ENCODE measurements at regions of chr10 and their contacts with region 1.

Region 1: DNA sequence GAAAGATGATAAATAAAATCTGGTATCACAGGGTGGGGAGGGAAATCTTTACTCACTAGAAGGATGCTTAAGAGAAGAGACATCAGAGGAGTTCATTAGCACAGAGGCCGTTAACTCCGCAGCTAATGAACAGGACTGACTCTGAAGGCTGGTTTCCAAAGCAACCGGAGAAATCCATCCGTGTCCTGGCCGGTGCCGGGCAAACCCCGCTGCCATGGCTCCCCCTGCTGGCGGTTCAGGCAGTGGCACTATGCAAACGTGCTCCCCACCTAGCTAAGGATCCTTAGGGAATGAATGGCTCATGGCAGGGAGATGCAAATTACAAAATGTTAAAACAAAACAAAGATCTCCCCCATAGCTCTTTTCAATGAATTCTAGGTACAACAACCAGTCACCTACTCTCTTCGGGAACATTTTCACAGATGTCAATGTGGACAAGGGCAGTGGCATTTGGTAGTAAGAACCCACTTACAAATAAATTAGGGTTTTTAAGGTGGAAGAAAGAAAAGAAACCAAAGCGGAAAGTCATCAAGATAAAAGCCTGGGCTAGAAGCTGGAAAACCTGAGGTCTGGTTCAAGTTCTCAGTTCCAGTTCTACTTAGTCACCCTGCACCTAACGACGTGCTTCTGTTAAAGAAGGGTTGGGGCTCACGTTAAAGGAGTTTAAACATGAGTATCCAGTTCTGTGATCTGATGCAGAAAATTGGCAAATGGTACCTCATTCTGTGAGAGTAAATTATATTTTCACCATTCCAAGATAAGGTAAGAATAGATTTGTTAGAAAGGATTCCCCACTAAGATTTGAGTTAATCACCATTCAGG is 138.2 kb downstream of the SVIL start:
- DNase-seq: peak; percentile 74 to 90 (median 83)
- H3K4me3 ChIP-seq: no peak overlapping the region
- H3K27ac ChIP-seq: no peak overlapping the region
- H3K4me1 ChIP-seq: no peaks in the 10 kb centered on the region
- H3K27me3 ChIP-seq: no peaks in the 10 kb centered on the region
- CTCF ChIP-seq: peak; percentile 88 to 96 (median 90)
- POLR2A ChIP-seq: no peak

Region 2: DNA sequence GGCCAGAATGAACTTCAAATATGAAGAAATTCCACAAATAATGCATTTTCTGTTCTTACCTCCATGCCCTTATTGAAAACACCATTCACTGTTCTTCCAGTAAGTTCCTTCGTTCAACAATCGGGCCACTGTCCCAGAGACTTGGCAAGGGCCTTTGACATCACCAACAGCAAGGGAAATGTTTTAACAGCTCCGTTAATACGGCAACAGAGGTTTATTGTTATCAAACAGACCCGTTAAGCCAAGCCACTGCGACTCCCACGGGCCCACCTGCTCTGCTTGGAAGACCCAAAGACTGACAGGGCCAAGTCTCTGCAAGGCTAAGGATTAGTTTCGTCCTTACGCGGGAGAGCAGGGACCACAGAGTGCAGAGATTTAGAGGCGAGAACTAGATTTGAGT is 251.1 kb before region 1 on chr10:
- intact Hi-C with region 1: no loop called
- DNase-seq: no peak
- H3K4me3 ChIP-seq: no peak overlapping the region
- H3K27ac ChIP-seq: no peak overlapping the region
- H3K4me1 ChIP-seq: no peaks in the 10 kb centered on the region
- H3K27me3 ChIP-seq: peaks cover 3% of the 10 kb centered on the region
- CTCF ChIP-seq: no peak
- POLR2A ChIP-seq: no peak

Region 3: DNA sequence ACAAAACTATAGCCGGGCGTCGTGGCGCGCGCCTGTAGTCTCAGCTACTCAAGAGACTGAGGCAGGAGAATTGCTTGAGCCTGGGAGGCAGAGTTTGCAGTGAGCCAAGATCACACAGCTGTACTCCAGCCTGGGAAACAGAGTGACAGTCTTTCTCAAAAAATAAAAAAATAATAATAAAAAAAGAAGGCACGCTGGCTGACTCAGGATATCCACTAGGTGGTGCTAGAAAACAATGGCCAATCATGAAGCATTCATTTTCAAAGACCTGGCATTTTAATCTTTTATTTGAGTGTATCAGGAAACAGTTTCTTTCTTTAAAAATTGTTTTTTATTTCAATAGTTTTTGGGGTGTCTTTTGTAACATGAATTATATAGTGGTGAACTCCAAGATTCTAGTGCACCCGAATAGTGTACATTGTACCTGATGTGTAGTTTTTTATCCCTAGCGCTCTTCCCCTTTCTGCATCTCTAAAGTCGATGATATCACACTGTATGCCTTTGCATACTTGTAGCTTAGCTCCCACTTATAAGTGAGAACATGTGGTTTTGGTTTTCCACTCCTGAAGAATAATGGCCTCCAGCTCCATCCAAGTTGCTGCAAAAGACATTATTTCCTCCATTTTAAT is 119.1 kb before region 1 on chr10:
- intact Hi-C with region 1: loop called (anchors 5 to 10 kb)
- DNase-seq: peak in 2 of 7 donors; percentile 30 to 34
- H3K4me3 ChIP-seq: no peak overlapping the region
- H3K27ac ChIP-seq: no peak overlapping the region
- H3K4me1 ChIP-seq: no peaks in the 10 kb centered on the region
- H3K27me3 ChIP-seq: no peaks in the 10 kb centered on the region
- CTCF ChIP-seq: peak; percentile 63 to 82 (median 78)
- POLR2A ChIP-seq: no peak

Region 4: GRCh38 chr10:29386342-29386999 is 110.1 kb before region 1 on chr10:
- intact Hi-C with region 1: loop called in 1 of 2 experiments (anchors 10 kb)
- DNase-seq: peak in 2 of 7 donors; percentile 19 to 33
- H3K4me3 ChIP-seq: no peak overlapping the region
- H3K27ac ChIP-seq: no peak overlapping the region
- H3K4me1 ChIP-seq: no peaks in the 10 kb centered on the region
- H3K27me3 ChIP-seq: no peaks in the 10 kb centered on the region
- CTCF ChIP-seq: peak; percentile 68 to 88 (median 76)
- POLR2A ChIP-seq: no peak

Measured in adrenal gland (tissue), 19 donors.